HEK293 (cell line): ENCODE measurements at regions of chr19 and their contacts with region 1.

Region 1: GRCh38 chr19:29926801-29927200 is 15.2 kb upstream of the URI1 start:
- H3K4me3 ChIP-seq: no peak overlapping the region
- H3K27ac ChIP-seq: no peak overlapping the region
- H3K4me1 ChIP-seq: no peaks in the 10 kb centered on the region
- CTCF ChIP-seq: no peak

Region 2: GRCh38 chr19:29941828-29942403 is 15.1 kb after region 1 on chr19 and contains the start of gene URI1:
- CTCF ChIA-PET with region 1: interaction called, 3 read pairs
- POLR2A ChIA-PET with region 1: interaction called, 10 read pairs
- H3K4me3 ChIP-seq: peak within 1 kb of the TSS; percentile 79
- H3K27ac ChIP-seq: peak within 1 kb of the TSS; percentile 93
- H3K4me1 ChIP-seq: peaks cover 40% of the 10 kb centered on the region
- CTCF ChIP-seq: no peak

Region 3: DNA sequence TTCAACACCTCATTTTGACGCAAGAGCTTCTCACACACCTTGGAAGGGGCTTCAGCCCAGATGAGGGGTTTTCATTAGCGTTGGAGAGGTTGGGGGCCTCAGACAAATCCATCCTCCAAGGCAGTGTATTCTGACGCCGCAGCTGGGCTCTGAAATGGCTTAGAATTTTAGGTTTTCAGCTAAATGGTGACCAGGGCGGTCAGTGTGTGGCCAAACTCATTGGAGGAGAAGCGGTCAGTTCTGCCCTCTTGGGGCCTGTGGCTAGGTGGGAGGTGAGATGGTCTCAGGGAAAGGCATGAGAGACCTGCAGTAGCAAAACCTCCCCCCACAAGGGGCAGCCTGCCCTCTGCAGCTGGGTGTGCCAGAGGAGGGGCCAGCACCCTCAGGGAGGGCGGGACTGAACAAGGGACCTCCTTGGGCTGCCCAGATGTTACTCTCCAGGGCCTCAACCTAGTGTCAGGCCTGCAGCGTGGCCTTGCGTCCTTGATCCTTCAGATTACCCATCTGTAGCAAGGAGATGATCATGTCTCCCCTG is 171.0 kb after region 1 on chr19:
- CTCF ChIA-PET with region 1: no interaction called
- POLR2A ChIA-PET with region 1: no interaction called
- H3K4me3 ChIP-seq: no peak overlapping the region
- H3K27ac ChIP-seq: no peak overlapping the region
- H3K4me1 ChIP-seq: no peaks in the 10 kb centered on the region
- CTCF ChIP-seq: no peak